Heart right ventricle (tissue), 16 donors: ENCODE measurements at regions of chr7 and their contacts with region 1.

Region 1: GRCh38 chr7:151381348-151382078 is 28.3 kb downstream of the WDR86 start:
- DNase-seq: no peak
- ATAC-seq: peak in 3 of 8 donors; percentile 15 to 17 (median 16)
- H3K4me3 ChIP-seq: peak overlapping the region in 9 of 10 donors; percentile 16 to 48 (median 36)
- H3K27ac ChIP-seq: no peak overlapping the region
- H3K4me1 ChIP-seq: peaks cover 3 to 19% (median 16%) of the 10 kb centered on the region in 9 donors
- H3K27me3 ChIP-seq: peaks cover 15 to 48% (median 39%) of the 10 kb centered on the region in 7 donors
- CTCF ChIP-seq: no peak

Region 2: DNA sequence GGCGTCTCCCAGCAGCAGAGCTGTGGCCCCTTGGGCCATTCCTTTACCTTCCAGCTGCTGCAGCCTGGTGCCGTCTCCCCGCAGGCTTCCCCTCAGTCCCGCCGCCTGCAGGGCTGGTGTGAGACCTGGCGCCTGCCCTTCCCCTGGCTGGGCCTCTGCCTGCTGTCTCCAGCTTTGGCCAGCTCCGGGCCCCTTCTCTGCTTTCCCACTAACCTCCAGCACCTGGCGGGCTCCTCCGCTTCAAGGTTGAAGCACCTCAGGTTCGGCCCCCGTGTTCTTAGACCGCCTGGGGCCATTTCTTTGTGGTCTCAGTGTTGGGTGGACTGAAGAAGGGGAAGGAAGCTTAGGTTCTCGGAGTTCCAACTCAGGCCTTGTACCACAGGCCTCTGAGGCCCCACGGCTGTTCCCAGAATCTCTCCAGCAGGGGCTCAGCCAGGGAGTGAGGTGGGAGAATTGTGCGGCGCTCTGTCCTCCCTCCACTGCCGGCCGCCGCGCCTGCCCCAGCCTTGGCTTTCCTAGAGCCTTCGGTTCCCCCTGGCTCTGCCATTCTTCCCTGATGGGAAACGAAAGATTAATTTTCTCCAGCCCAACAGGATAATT is 244.3 kb before region 1 on chr7:
- intact Hi-C with region 1: no loop called
- DNase-seq: no peak
- ATAC-seq: peak in 5 of 8 donors; percentile 21 to 47 (median 41)
- H3K4me3 ChIP-seq: no peak overlapping the region
- H3K27ac ChIP-seq: peak overlapping the region in 8 of 10 donors; percentile 11 to 63 (median 49)
- H3K4me1 ChIP-seq: peaks cover 0 to 40% (median 17%) of the 10 kb centered on the region in 9 donors
- H3K27me3 ChIP-seq: no peaks in the 10 kb centered on the region
- CTCF ChIP-seq: peak in 2 of 9 donors; percentile 11 to 22

Region 3: GRCh38 chr7:151439855-151440798 is 58.6 kb after region 1 on chr7 and contains the start of gene CRYGN:
- intact Hi-C with region 1: loop called in 3 of 10 experiments (anchors 5 kb)
- DNase-seq: no peak
- ATAC-seq: peak in 3 of 8 donors; percentile 10 to 18 (median 10)
- H3K4me3 ChIP-seq: peak within 1 kb of the TSS; percentile 18 to 46 (median 30)
- H3K27ac ChIP-seq: no peak within 1 kb of the TSS
- H3K4me1 ChIP-seq: peaks cover 0 to 25% (median 15%) of the 10 kb centered on the region in 9 donors
- H3K27me3 ChIP-seq: peaks cover 0 to 33% (median 23%) of the 10 kb centered on the region in 7 donors
- CTCF ChIP-seq: no peak
- total RNA-seq, gene CRYGN: 0.15 to 0.72 TPM in 2 of 10 donors, not detected in the others